Activated CD4-positive, alpha-beta T cell treated with anti-CD3 and anti-CD28 coated beads for 36 hours (primary cell): ENCODE measurements at regions of chr12 and their contacts with region 1.

Region 1: DNA sequence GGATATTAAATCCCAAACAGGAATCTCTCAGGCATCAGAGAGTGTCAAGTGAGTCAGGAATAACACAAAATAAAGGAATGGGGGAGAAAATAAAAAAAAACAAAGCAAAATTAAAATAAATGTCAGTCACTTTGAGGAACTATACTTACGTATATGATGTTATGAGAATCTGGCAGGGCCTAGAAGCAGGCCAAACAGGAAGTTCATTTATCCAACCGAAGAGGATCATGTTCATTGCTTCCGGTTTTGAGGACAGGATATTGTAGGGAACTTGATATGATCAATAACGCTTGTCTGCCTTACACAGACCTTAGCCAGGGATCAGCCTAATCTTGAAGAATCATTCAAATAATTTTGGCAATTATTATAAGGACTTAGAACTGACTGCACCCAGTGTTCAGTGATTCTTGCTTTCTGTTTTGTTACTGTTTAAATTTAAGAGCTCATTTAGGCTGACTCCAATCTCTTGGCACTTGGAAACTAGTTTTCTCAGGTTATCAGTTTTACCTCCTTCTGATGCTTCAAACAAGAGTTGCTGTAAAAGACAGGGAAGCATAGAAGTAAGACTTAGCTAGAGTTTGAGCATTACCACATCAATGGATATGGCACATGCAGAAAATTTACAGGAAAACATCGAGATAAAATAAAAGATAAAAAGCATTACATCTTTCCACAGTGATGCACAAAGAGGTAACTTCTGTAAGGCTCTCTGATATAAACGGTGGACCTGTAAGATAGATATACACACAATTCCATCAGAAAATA is 53.4 kb downstream of the ZFC3H1 start:
- DNase-seq: no peak
- ATAC-seq: peak; percentile 30
- H3K4me3 Mint-ChIP-seq: no peak overlapping the region
- H3K27ac Mint-ChIP-seq: peak overlapping the region; percentile 85
- H3K4me1 Mint-ChIP-seq: peaks cover 22% of the 10 kb centered on the region
- H3K27me3 Mint-ChIP-seq: no peaks in the 10 kb centered on the region

Region 2: DNA sequence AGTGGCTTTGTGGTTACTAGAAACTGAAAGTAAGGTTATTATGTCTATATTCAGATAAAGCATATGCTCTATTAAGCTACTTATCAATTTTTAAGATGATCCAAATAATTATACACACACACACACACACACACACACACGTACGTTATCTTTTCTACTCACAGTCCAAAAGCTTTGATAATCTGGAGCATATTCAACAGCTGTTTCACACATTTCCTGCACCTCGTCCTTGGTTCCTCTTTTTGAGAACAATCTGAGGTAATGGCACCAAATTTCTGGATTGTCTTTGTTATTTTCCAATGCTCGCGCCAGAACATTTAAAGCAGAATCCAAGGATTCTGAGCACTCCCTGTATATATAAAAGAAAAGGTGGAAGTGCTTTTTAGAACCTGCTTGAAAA is 15.9 kb after region 1 on chr12:
- CTCF ChIA-PET with region 1: interaction called, 4 read pairs
- POLR2A ChIA-PET with region 1: interaction called, 4 read pairs
- intact Hi-C with region 1: loop called in 1 of 2 experiments (anchors 2 kb)
- DNase-seq: no peak
- ATAC-seq: no peak
- H3K4me3 Mint-ChIP-seq: no peak overlapping the region
- H3K27ac Mint-ChIP-seq: peak overlapping the region; percentile 15
- H3K4me1 Mint-ChIP-seq: peaks cover 17% of the 10 kb centered on the region
- H3K27me3 Mint-ChIP-seq: no peaks in the 10 kb centered on the region

Region 3: GRCh38 chr12:71636704-71637115 is 26.5 kb after region 1 on chr12:
- CTCF ChIA-PET with region 1: interaction called, 23 read pairs
- POLR2A ChIA-PET with region 1: interaction called, 3 read pairs
- intact Hi-C with region 1: no loop called
- DNase-seq: no peak
- ATAC-seq: peak; percentile 43
- H3K4me3 Mint-ChIP-seq: no peak overlapping the region
- H3K27ac Mint-ChIP-seq: peak overlapping the region; percentile 73
- H3K4me1 Mint-ChIP-seq: peaks cover 21% of the 10 kb centered on the region
- H3K27me3 Mint-ChIP-seq: no peaks in the 10 kb centered on the region

Region 4: DNA sequence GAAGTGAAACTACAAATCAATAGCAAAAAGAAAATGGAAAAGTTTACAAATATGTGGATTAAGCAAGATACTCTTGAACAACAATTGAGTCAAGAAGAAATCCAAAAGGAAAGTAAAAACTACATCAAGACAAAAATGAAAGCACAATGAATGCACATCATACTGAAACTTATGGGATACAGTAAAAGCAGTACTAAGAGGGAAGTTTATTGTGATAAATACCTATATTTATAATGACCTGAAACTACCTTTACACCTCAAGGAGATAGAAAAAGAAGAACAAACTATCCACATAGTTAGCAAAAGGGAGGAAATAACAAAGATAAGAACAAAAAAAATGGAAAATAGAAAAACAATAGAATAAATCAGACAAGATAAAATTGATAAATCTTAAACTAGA is 1036.9 kb after region 1 on chr12:
- CTCF ChIA-PET with region 1: no interaction called
- POLR2A ChIA-PET with region 1: no interaction called
- intact Hi-C with region 1: no loop called
- DNase-seq: no peak
- ATAC-seq: no peak
- H3K4me3 Mint-ChIP-seq: no peak overlapping the region
- H3K27ac Mint-ChIP-seq: no peak overlapping the region
- H3K4me1 Mint-ChIP-seq: no peaks in the 10 kb centered on the region
- H3K27me3 Mint-ChIP-seq: no peaks in the 10 kb centered on the region